AG04450 (cell line): ENCODE measurements at regions of chr7 and their contacts with region 1.

Region 1: DNA sequence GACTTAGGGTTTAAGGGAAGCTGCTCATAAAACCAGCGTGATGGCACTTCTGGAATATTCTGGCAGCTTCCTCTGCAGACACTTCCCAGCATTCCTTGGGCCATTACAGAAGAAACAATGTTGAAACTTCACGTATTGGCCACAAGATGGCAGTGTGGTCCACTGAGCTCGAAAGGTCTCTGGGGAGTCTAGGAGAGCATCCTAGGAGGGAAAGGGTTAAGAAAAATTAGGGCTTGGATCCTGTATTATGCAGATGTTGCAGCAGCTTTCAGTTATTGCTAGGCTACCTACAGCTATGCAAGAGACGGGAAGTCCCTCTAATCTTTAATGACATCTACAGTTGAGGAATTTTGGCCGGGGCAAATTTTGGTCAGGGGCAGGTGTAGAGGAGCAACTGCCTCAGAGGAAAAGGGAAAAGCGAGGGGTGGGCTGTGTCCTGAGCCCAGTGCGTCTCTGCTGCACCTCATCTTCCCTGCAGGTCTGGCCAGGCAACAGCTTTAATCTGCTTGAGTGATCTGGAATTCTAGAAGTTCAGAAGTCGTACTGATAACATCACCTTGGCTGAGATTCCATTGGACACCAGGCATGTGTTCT is 220.7 kb upstream of the PRSS58 start:
- DNase-seq: no peak
- H3K4me3 ChIP-seq: no peak overlapping the region
- H3K27ac ChIP-seq: no peak overlapping the region
- H3K27me3 ChIP-seq: no peaks in the 10 kb centered on the region
- CTCF ChIP-seq: peak; percentile 61

Region 2: GRCh38 chr7:142385491-142386340 is 92.9 kb before region 1 on chr7:
- CTCF ChIA-PET with region 1: interaction called, 20 read pairs
- POLR2A ChIA-PET with region 1: no interaction called
- DNase-seq: peak; percentile 33
- H3K4me3 ChIP-seq: no peak overlapping the region
- H3K27ac ChIP-seq: no peak overlapping the region
- H3K27me3 ChIP-seq: no peaks in the 10 kb centered on the region
- CTCF ChIP-seq: peak; percentile 81

Region 3: GRCh38 chr7:142438235-142438922 is 40.2 kb before region 1 on chr7:
- CTCF ChIA-PET with region 1: interaction called, 31 read pairs
- POLR2A ChIA-PET with region 1: no interaction called
- DNase-seq: no peak
- H3K4me3 ChIP-seq: no peak overlapping the region
- H3K27ac ChIP-seq: no peak overlapping the region
- H3K27me3 ChIP-seq: no peaks in the 10 kb centered on the region
- CTCF ChIP-seq: peak; percentile 56

Region 4: GRCh38 chr7:142496545-142497041 is 18.0 kb after region 1 on chr7:
- CTCF ChIA-PET with region 1: interaction called, 79 read pairs
- POLR2A ChIA-PET with region 1: no interaction called
- DNase-seq: no peak
- H3K4me3 ChIP-seq: no peak overlapping the region
- H3K27ac ChIP-seq: no peak overlapping the region
- H3K27me3 ChIP-seq: peaks cover 5% of the 10 kb centered on the region
- CTCF ChIP-seq: peak; percentile 70

Region 5: GRCh38 chr7:142557971-142558582 is 79.5 kb after region 1 on chr7:
- CTCF ChIA-PET with region 1: interaction called, 12 read pairs
- POLR2A ChIA-PET with region 1: no interaction called
- DNase-seq: no peak
- H3K4me3 ChIP-seq: no peak overlapping the region
- H3K27ac ChIP-seq: no peak overlapping the region
- H3K27me3 ChIP-seq: no peaks in the 10 kb centered on the region
- CTCF ChIP-seq: peak; percentile 65

Region 6: GRCh38 chr7:142910031-142910433 is 431.5 kb after region 1 on chr7:
- CTCF ChIA-PET with region 1: no interaction called
- POLR2A ChIA-PET with region 1: no interaction called
- DNase-seq: no peak
- H3K4me3 ChIP-seq: no peak overlapping the region
- H3K27ac ChIP-seq: no peak overlapping the region
- H3K27me3 ChIP-seq: no peaks in the 10 kb centered on the region
- CTCF ChIP-seq: no peak